ENCODE measurements at regions of chr2 and their contacts with region 1.

Region 1: GRCh38 chr2:13227578-13227977 is 510.8 kb downstream of the TRIB2 start:
- DNase-seq: no peak
- H3K4me3 Mint-ChIP-seq: no peak overlapping the region
- H3K27ac Mint-ChIP-seq: no peak overlapping the region
- H3K4me1 Mint-ChIP-seq: peaks cover 16% of the 10 kb centered on the region
- H3K27me3 Mint-ChIP-seq: no peaks in the 10 kb centered on the region
- CTCF ChIP-seq: no peak

Region 2: GRCh38 chr2:13121096-13121495 is 106.5 kb before region 1 on chr2:
- CTCF ChIA-PET with region 1: no interaction called
- intact Hi-C with region 1: no loop called
- DNase-seq: no peak
- H3K4me3 Mint-ChIP-seq: no peak overlapping the region
- H3K27ac Mint-ChIP-seq: no peak overlapping the region
- H3K4me1 Mint-ChIP-seq: no peaks in the 10 kb centered on the region
- H3K27me3 Mint-ChIP-seq: no peaks in the 10 kb centered on the region
- CTCF ChIP-seq: no peak

Region 3: GRCh38 chr2:13522917-13523821 is 295.6 kb after region 1 on chr2:
- CTCF ChIA-PET with region 1: no interaction called
- intact Hi-C with region 1: loop called (anchors 10 kb)
- DNase-seq: peak; percentile 72
- H3K4me3 Mint-ChIP-seq: peak overlapping the region; percentile 54
- H3K27ac Mint-ChIP-seq: peak overlapping the region; percentile 79
- H3K4me1 Mint-ChIP-seq: peaks cover 40% of the 10 kb centered on the region
- H3K27me3 Mint-ChIP-seq: no peaks in the 10 kb centered on the region
- CTCF ChIP-seq: no peak